CD8-positive, alpha-beta T cell (primary cell): ENCODE measurements at regions of chr12 and their contacts with region 1.

Region 1: DNA sequence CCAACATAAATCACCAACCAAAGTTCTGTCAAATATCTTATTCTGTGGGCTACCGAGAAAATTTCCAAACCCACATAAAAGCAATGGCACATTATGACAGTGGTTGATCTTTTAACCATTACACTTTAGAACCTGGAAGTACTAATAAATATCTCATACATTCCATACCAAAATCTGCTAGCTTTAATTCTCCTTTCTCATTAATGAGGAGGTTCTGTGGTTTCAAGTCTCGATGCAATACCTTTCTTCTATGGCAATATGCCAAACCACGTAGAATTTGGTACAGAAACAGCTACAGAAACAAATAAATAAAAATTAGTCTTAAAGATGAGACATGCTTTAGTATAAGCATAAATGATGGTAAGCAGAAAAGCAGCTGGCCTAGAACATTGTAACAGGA is 100.7 kb downstream of the ELK3 start:
- DNase-seq: peak in 2 of 9 experiments; percentile 37 to 56
- ATAC-seq: peak; percentile 29
- H3K4me3 ChIP-seq: no peak overlapping the region
- H3K4me3 Mint-ChIP-seq: no peak overlapping the region
- H3K27ac ChIP-seq: peak overlapping the region in 1 of 2 experiments; percentile 3
- H3K27ac Mint-ChIP-seq: no peak overlapping the region
- H3K4me1 ChIP-seq: peaks cover 13% of the 10 kb centered on the region
- H3K4me1 Mint-ChIP-seq: peaks cover 24% of the 10 kb centered on the region
- H3K27me3 ChIP-seq: no peaks in the 10 kb centered on the region
- H3K27me3 Mint-ChIP-seq: no peaks in the 10 kb centered on the region
- CTCF ChIP-seq: no peak

Region 2: DNA sequence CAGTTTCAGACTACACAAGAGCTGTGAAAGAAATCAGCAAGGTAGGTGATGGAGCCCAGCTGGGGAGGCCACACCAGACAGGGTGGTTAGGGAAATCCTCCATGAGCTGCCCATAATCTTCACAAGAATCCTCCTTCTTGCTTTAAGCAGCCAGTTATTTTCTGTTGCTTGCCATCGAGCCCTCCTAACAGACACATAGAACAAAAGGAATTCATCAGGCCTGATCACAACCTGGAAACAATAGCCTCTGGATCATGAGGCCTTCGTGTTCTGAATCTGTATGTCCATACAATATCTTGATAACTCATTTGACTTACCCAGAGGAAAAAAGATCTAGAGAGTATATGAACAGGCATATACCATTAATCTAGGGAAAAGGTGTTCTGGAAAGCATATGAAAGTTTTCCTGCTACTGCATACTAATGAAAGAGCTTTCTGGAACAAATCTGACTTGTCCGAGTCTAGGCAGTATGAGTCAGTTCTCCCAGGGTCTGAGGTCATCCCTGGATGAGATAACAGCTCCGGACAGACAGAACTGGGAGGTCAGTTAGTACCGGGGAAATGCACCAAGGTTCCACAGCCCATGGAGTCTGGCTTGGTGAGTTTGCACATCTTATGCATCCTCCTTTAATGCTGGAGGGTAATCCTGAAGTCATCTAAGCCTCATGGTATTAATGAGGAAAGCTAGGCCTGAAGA is 153.5 kb before region 1 on chr12:
- CTCF ChIA-PET with region 1: no interaction called
- POLR2A ChIA-PET with region 1: no interaction called
- intact Hi-C with region 1: no loop called
- DNase-seq: no peak
- ATAC-seq: no peak
- H3K4me3 ChIP-seq: no peak overlapping the region
- H3K4me3 Mint-ChIP-seq: no peak overlapping the region
- H3K27ac ChIP-seq: no peak overlapping the region
- H3K27ac Mint-ChIP-seq: no peak overlapping the region
- H3K4me1 ChIP-seq: peaks cover 16% of the 10 kb centered on the region
- H3K4me1 Mint-ChIP-seq: peaks cover 19% of the 10 kb centered on the region
- H3K27me3 ChIP-seq: no peaks in the 10 kb centered on the region
- H3K27me3 Mint-ChIP-seq: no peaks in the 10 kb centered on the region
- CTCF ChIP-seq: no peak

Region 3: DNA sequence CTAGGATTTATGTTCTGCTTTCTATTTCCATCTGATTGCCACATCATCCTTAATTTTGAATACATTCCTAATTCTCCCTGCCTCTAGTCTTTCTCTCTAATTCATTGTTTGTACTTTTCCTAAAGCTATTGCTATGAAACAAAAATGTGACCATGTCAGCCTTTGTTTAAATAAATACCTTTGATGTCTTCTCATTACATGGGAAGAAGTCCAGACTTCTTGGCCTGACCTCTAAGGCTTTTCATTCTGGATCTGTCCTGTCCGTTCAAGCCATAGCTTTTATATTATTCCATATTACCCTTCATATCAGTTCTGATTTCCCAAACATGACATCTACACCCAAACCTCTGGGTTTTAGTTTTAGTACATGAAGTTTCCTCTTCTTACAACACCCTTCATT is 14.1 kb after region 1 on chr12:
- CTCF ChIA-PET with region 1: no interaction called
- POLR2A ChIA-PET with region 1: no interaction called
- intact Hi-C with region 1: loop called in 1 of 2 experiments (anchors 2 kb)
- DNase-seq: no peak
- ATAC-seq: no peak
- H3K4me3 ChIP-seq: no peak overlapping the region
- H3K4me3 Mint-ChIP-seq: no peak overlapping the region
- H3K27ac ChIP-seq: no peak overlapping the region
- H3K27ac Mint-ChIP-seq: no peak overlapping the region
- H3K4me1 ChIP-seq: peaks cover 3% of the 10 kb centered on the region
- H3K4me1 Mint-ChIP-seq: peaks cover 34% of the 10 kb centered on the region
- H3K27me3 ChIP-seq: no peaks in the 10 kb centered on the region
- H3K27me3 Mint-ChIP-seq: no peaks in the 10 kb centered on the region
- CTCF ChIP-seq: no peak